ENCODE measurements at regions of chr5 and their contacts with region 1.

Region 1: DNA sequence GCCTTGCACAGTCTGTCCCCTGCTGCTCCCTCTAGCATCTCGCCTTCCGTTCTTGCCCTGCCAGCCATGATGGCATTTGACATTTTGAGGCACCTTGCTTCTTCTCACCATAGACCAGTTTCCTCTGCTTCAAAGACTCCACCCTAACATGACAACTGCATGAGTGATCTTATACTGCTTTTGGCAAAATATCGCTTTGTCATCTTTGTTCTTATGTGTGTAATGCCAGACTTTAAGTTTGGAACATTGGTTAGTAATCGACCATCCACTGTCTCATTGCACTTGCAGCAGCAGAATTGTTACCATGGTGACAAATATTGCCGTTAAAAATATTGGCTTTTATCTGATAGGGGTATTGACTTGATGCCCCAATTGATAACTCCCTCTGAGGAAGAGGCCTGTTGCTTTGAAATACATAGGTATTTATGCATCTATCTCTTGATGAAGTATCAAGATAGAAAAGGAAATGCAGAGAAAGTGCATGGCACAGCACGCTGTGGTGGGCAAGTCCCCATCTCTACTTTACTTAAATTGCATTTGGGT is 6.8 kb downstream of the GARIN3 start:
- DNase-seq: peak in 7 of 9 donors; percentile 31 to 76 (median 58)
- ATAC-seq: peak; percentile 84
- H3K4me3 ChIP-seq: peak overlapping the region; percentile 7
- H3K4me3 Mint-ChIP-seq: peak overlapping the region in 9 of 10 donors; percentile 42 to 76 (median 55)
- H3K27ac ChIP-seq: peak overlapping the region; percentile 67
- H3K27ac Mint-ChIP-seq: peak overlapping the region; percentile 68 to 84 (median 79)
- H3K4me1 ChIP-seq: peaks cover 43 to 44% of the 10 kb centered on the region in 2 donors
- H3K4me1 Mint-ChIP-seq: peaks cover 34 to 78% (median 70%) of the 10 kb centered on the region in 7 donors
- H3K27me3 ChIP-seq: no peaks in the 10 kb centered on the region
- H3K27me3 Mint-ChIP-seq: no peaks in the 10 kb centered on the region

Region 2: DNA sequence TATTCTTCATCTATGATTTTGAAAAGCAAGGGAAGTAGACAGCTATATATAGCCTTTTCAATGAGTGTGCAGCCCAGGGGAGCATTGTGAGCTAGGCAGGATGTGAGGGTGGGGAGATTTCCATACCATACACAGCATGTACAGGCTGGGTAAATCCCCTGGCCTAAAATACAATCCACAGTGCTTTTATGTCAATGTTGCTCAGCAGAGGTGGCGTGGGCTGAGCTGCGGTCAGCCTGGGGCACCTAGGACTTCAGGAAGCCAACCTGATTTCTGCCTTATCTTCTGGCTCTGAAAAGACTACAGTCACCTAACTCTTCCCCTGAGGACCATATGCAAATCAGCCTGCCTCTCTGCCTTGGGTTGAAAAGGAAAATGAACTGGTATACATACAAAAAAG is 13.1 kb after region 1 on chr5:
- CTCF ChIA-PET with region 1: interaction called, 5 read pairs
- POLR2A ChIA-PET with region 1: interaction called, 15 read pairs
- intact Hi-C with region 1: loop called (anchors 1 kb)
- DNase-seq: peak; percentile 21 to 90 (median 75)
- ATAC-seq: peak; percentile 98
- H3K4me3 ChIP-seq: peak overlapping the region; percentile 33
- H3K4me3 Mint-ChIP-seq: peak overlapping the region; percentile 49 to 82 (median 73)
- H3K27ac ChIP-seq: peak overlapping the region; percentile 80
- H3K27ac Mint-ChIP-seq: peak overlapping the region; percentile 83 to 96 (median 94)
- H3K4me1 ChIP-seq: peaks cover 20 to 35% of the 10 kb centered on the region in 2 donors
- H3K4me1 Mint-ChIP-seq: peaks cover 33 to 91% (median 73%) of the 10 kb centered on the region in 7 donors
- H3K27me3 ChIP-seq: no peaks in the 10 kb centered on the region
- H3K27me3 Mint-ChIP-seq: no peaks in the 10 kb centered on the region

Region 3: DNA sequence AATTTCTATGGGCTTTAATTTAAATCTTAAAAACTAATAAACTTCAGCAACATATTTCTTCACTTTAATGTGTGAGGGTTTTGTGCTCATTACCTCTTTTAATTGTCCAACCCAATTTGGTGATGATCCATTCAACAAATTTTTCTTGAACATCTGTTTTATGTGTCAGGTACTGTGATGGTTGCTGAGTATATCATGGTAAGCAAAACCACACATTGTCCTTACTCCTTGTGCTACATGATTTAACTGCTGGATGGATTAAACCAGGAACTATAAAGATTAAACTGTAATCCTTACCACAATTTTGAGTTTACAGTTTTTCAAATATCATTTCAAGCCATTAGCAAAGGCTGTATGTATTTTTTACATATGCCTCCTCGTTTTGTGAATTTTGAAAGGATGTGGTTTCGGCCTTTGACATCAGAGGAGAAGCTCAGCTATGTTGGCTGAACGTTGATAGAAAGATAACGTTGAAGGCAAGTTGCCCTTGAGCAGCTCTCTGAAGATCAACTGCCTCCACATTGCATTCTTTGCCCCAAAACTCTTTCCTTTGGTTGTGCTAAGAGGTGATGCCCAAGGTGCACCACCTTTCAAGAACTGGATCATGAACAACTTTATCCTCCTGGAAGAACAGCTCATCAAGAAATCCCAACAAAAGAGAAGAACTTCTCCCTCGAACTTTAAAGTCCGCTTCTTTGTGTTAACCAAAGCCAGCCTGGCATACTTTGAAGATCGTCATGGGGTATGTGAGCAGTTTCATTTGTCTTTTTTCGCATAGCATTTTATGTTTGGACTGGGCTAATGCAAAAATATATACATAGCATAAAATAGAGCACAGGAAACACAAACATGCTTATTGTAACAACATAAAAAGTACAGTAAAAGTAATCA is 21.3 kb after region 1 on chr5 and contains the start of gene ITK:
- CTCF ChIA-PET with region 1: interaction called, 5 read pairs
- POLR2A ChIA-PET with region 1: interaction called, 21 read pairs
- intact Hi-C with region 1: loop called (anchors 1 kb)
- DNase-seq: peak in 7 of 9 donors; percentile 66 to 84 (median 77)
- ATAC-seq: peak; percentile 88
- H3K4me3 ChIP-seq: peak within 1 kb of the TSS; percentile 62
- H3K4me3 Mint-ChIP-seq: peak within 1 kb of the TSS; percentile 89 to 100 (median 97)
- H3K27ac ChIP-seq: peak within 1 kb of the TSS; percentile 81
- H3K27ac Mint-ChIP-seq: peak within 1 kb of the TSS; percentile 91 to 99 (median 96)
- H3K4me1 ChIP-seq: peaks cover 33 to 42% of the 10 kb centered on the region in 2 donors
- H3K4me1 Mint-ChIP-seq: peaks cover 27 to 61% (median 50%) of the 10 kb centered on the region in 7 donors
- H3K27me3 ChIP-seq: no peaks in the 10 kb centered on the region
- H3K27me3 Mint-ChIP-seq: no peaks in the 10 kb centered on the region
- total RNA-seq, gene ITK: 278 to 481 (median 324) TPM

Region 4: GRCh38 chr5:157189223-157189622 is 29.9 kb after region 1 on chr5:
- CTCF ChIA-PET with region 1: no interaction called
- POLR2A ChIA-PET with region 1: interaction called, 12 read pairs
- intact Hi-C with region 1: loop called in 1 of 2 experiments (anchors 5 kb)
- DNase-seq: no peak
- ATAC-seq: no peak
- H3K4me3 ChIP-seq: peak overlapping the region; percentile 68
- H3K4me3 Mint-ChIP-seq: peak overlapping the region; percentile 83 to 100 (median 96)
- H3K27ac ChIP-seq: peak overlapping the region; percentile 81
- H3K27ac Mint-ChIP-seq: peak overlapping the region; percentile 63 to 98 (median 91)
- H3K4me1 ChIP-seq: peaks cover 75 to 81% of the 10 kb centered on the region in 2 donors
- H3K4me1 Mint-ChIP-seq: peaks cover 56 to 94% (median 83%) of the 10 kb centered on the region in 7 donors
- H3K27me3 ChIP-seq: no peaks in the 10 kb centered on the region
- H3K27me3 Mint-ChIP-seq: no peaks in the 10 kb centered on the region

Region 5: GRCh38 chr5:157198277-157198986 is 39.2 kb after region 1 on chr5:
- CTCF ChIA-PET with region 1: no interaction called
- POLR2A ChIA-PET with region 1: interaction called, 13 read pairs
- intact Hi-C with region 1: loop called in 1 of 2 experiments (anchors 5 kb)
- DNase-seq: peak in 2 of 9 donors; percentile 58 to 77
- ATAC-seq: peak; percentile 49
- H3K4me3 ChIP-seq: peak overlapping the region; percentile 24
- H3K4me3 Mint-ChIP-seq: peak overlapping the region; percentile 47 to 98 (median 78)
- H3K27ac ChIP-seq: peak overlapping the region; percentile 81
- H3K27ac Mint-ChIP-seq: peak overlapping the region; percentile 78 to 98 (median 87)
- H3K4me1 ChIP-seq: peaks cover 86 to 95% of the 10 kb centered on the region in 2 donors
- H3K4me1 Mint-ChIP-seq: peaks cover 53 to 100% (median 97%) of the 10 kb centered on the region in 7 donors
- H3K27me3 ChIP-seq: no peaks in the 10 kb centered on the region
- H3K27me3 Mint-ChIP-seq: no peaks in the 10 kb centered on the region

Region 6: GRCh38 chr5:157204765-157205164 is 45.5 kb after region 1 on chr5:
- CTCF ChIA-PET with region 1: no interaction called
- POLR2A ChIA-PET with region 1: interaction called, 13 read pairs
- intact Hi-C with region 1: no loop called
- DNase-seq: peak in 7 of 9 donors; percentile 44 to 84 (median 73)
- ATAC-seq: peak; percentile 69
- H3K4me3 ChIP-seq: peak overlapping the region; percentile 10
- H3K4me3 Mint-ChIP-seq: peak overlapping the region; percentile 7 to 93 (median 76)
- H3K27ac ChIP-seq: peak overlapping the region; percentile 64
- H3K27ac Mint-ChIP-seq: peak overlapping the region; percentile 79 to 98 (median 95)
- H3K4me1 ChIP-seq: peaks cover 77 to 87% of the 10 kb centered on the region in 2 donors
- H3K4me1 Mint-ChIP-seq: peaks cover 43 to 96% (median 90%) of the 10 kb centered on the region in 7 donors
- H3K27me3 ChIP-seq: no peaks in the 10 kb centered on the region
- H3K27me3 Mint-ChIP-seq: no peaks in the 10 kb centered on the region

Region 7: DNA sequence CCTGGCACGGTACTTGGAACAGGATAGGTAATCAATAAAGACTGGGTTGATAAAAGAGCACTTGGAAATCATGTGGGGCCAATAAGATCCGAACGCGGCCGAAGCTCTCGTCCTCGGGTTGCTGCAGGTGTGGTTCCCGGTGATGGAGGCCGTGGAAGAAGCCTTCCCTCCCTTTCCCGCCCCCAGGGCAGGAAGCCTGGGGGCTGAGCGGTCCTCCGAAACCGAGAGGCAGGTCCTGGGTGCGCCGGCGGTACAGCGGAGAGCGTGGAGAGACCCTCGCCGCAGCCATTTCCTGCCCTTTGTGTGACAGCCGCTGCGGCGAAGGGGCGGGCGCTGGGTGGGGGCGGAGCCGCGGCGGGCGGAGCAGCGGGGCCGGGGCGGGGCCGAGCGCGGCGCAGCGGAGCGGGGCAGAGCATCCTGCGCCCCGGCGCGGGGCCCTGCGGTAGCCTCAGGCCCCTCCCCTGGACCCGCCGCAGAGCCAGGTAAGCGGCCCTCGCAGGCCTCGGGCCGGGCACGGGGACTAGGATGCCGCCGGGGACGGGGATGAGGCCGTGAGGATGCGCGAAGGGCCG is 106.5 kb after region 1 on chr5 and contains the start of gene CYFIP2:
- CTCF ChIA-PET with region 1: no interaction called
- POLR2A ChIA-PET with region 1: interaction called, 11 read pairs
- intact Hi-C with region 1: no loop called
- DNase-seq: peak; percentile 68 to 85 (median 84)
- ATAC-seq: peak; percentile 94
- H3K4me3 ChIP-seq: peak within 1 kb of the TSS; percentile 83
- H3K4me3 Mint-ChIP-seq: peak within 1 kb of the TSS; percentile 95 to 99 (median 97)
- H3K27ac ChIP-seq: peak within 1 kb of the TSS; percentile 84
- H3K27ac Mint-ChIP-seq: peak within 1 kb of the TSS; percentile 95 to 99 (median 98)
- H3K4me1 ChIP-seq: peaks cover 41 to 57% of the 10 kb centered on the region in 2 donors
- H3K4me1 Mint-ChIP-seq: peaks cover 51 to 76% (median 72%) of the 10 kb centered on the region in 7 donors
- H3K27me3 ChIP-seq: no peaks in the 10 kb centered on the region
- H3K27me3 Mint-ChIP-seq: no peaks in the 10 kb centered on the region
- total RNA-seq, gene CYFIP2: 386 to 449 (median 401) TPM

Measured in naive thymus-derived CD4-positive, alpha-beta T cell (primary cell).